Activated CD4-positive, alpha-beta T cell treated with anti-CD3 and anti-CD28 coated beads for 36 hours (primary cell): ENCODE measurements at regions of chr17 and their contacts with region 1.

Region 1: GRCh38 chr17:78818932-78819331 is 21.7 kb downstream of the USP36 start:
- DNase-seq: peak; percentile 64
- ATAC-seq: peak; percentile 28
- H3K4me3 Mint-ChIP-seq: peak overlapping the region; percentile 30
- H3K27ac Mint-ChIP-seq: peak overlapping the region; percentile 90
- H3K4me1 Mint-ChIP-seq: peaks cover 66% of the 10 kb centered on the region
- H3K27me3 Mint-ChIP-seq: no peaks in the 10 kb centered on the region

Region 2: DNA sequence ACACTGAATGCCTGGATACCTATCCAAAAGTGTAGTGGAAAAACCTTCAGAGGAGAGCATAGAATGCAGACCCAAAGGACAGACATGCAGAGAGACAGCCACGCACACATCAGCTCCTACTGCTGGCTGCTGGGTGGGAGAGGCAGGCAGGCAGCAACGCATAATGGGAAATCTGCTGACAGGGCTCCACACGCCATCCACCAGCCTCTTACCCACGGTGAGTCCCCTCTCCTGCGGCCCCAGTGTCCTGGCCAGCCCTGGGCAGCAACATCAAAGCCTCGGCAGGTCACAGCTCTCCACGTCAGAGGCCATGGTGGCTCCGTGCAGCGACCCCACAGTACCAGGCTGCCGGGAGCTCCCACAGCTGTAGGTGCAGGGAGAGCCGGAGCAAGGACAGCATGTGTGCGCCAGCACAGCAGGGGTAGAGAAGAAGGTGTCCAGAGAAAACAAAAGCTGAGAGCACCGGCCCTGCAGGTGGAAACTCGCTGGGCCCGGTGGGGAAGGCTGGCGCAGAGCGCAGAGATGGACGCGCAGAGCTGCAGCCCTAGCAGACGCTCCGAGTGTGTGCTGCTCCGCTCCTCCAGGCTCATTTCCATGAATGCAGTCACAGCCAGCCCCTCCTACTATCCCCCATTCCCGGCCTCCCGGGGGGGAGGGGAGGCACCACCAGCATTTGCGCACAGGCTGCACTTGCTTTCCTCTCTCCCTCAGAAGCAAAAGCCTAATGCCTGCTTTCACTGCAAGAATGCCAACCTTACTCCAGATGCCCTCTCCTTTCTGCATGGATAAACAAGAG is 95.7 kb before region 1 on chr17:
- CTCF ChIA-PET with region 1: interaction called, 3 read pairs
- POLR2A ChIA-PET with region 1: no interaction called
- intact Hi-C with region 1: loop called in 1 of 2 experiments (anchors 1 kb)
- DNase-seq: no peak
- ATAC-seq: no peak
- H3K4me3 Mint-ChIP-seq: no peak overlapping the region
- H3K27ac Mint-ChIP-seq: peak overlapping the region; percentile 83
- H3K4me1 Mint-ChIP-seq: peaks cover 94% of the 10 kb centered on the region
- H3K27me3 Mint-ChIP-seq: no peaks in the 10 kb centered on the region

Region 3: DNA sequence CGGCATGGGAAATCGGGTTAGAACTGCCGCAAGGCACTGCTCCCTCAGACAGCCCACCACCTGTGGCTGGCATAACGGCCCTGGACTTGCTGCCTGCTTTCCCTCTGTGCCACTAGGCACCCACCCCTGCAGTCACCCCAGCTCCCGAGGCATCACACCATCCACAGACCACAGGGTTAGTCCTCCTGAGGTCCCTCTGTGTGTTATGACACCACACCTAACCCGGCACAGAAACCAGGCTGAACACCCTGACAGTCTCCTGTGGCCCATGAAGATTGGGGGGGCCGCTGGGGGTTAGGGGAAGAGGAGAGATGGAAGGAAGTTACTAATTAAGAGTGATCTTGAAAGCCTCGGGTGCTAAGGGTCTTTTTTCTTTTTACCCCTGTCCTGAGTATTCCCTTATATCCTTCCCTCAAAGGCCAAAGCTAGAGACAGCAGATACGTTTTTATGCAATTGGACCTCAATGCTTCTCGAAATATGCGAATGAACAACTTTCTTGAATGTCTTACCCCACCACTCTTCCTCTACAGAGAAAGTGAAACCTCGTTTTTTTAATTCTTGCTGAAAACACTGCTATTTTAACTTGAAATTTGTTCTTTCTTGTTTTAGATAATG is 43.9 kb before region 1 on chr17:
- CTCF ChIA-PET with region 1: no interaction called
- POLR2A ChIA-PET with region 1: no interaction called
- intact Hi-C with region 1: loop called in 1 of 2 experiments (anchors 5 kb)
- DNase-seq: peak; percentile 86
- ATAC-seq: peak; percentile 67
- H3K4me3 Mint-ChIP-seq: peak overlapping the region; percentile 84
- H3K27ac Mint-ChIP-seq: peak overlapping the region; percentile 100
- H3K4me1 Mint-ChIP-seq: peaks cover 68% of the 10 kb centered on the region
- H3K27me3 Mint-ChIP-seq: no peaks in the 10 kb centered on the region

Region 4: GRCh38 chr17:78805301-78805700 is 13.6 kb before region 1 on chr17:
- CTCF ChIA-PET with region 1: interaction called, 5 read pairs
- POLR2A ChIA-PET with region 1: interaction called, 8 read pairs
- intact Hi-C with region 1: loop called (anchors 1 kb)
- DNase-seq: peak; percentile 91
- ATAC-seq: peak; percentile 94
- H3K4me3 Mint-ChIP-seq: peak overlapping the region; percentile 41
- H3K27ac Mint-ChIP-seq: peak overlapping the region; percentile 95
- H3K4me1 Mint-ChIP-seq: peaks cover 57% of the 10 kb centered on the region
- H3K27me3 Mint-ChIP-seq: no peaks in the 10 kb centered on the region

Region 5: DNA sequence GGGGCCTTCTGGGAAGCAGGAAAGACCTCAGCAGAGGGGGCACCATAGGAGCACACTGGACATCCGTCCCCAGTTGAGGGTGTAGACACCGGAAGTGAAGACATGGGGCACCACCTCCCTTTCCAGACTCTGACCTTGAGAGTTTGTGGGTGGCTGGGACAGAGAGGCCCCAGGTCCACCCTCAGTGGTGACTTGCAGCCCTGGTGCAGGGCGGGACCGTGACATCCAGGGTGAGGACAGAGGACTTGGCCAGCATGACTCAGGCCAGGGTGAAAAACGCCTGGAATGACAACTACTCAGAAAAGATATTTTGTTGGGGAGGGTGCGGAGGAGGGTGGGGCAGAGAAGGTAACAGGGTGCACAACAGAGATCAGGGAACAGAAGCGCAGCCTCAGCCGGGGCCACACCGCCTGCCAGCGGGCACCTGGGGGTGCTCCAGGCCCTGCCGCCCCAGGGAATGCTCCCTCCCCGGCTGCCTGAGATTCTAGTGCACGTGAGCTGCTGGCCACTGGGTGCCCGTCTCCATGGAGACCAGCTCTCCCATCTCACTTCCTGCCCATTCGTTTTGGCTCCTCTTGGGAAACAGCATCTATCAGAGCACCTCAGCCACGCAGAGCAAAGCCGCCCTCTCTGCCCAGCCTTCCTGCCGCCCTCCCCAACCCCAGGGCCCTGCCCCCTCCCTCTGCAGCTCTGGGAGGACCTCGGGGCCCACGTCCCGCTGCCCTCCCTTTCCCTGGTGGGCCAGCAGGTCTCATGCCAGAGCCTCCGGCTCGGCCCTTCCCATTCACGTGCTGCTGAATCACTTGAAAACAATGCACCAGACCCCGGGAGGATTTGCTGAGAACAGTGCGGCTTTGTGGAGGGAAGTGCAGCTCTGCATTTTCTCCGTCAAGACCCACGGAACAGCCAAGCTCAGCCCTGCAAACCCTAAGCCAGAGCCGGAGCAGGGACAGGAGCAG is 64.5 kb after region 1 on chr17:
- CTCF ChIA-PET with region 1: no interaction called
- POLR2A ChIA-PET with region 1: interaction called, 11 read pairs
- intact Hi-C with region 1: no loop called
- DNase-seq: peak; percentile 18
- ATAC-seq: peak; percentile 32
- H3K4me3 Mint-ChIP-seq: no peak overlapping the region
- H3K27ac Mint-ChIP-seq: peak overlapping the region; percentile 72
- H3K4me1 Mint-ChIP-seq: peaks cover 27% of the 10 kb centered on the region
- H3K27me3 Mint-ChIP-seq: no peaks in the 10 kb centered on the region

Region 6: DNA sequence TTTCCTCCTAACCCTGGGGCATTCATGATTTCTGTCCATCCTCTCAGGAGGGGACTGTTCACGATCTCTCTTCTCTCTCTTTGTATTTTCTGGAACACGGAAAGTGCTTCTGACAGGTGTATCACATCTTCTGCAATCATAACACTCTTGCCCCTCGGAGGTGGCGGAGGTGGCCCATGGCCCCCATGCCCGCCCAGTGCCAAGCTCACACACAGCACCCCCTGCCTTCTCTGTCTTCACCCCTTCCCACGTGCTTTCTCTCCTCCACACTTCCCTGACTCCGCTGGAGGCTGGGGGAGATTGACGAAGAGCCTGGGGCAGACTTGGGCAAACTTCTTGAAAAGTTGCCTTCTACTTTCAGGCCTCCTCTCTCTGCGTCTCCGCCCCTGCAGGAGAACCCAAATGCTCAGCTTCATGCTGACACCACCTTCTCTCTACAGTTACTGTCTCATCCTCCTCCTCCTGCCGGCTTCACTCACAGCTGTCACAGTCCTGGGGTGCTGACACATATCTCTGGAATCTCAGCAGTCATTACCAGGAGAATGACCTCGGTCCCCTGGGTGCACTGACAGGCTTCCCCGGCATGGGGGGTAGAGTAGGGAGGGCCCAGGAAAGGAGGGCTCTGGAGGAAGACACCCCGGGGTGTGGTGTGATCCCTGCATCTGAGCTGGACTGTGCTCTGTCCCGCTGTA is 382.8 kb after region 1 on chr17:
- CTCF ChIA-PET with region 1: no interaction called
- POLR2A ChIA-PET with region 1: no interaction called
- intact Hi-C with region 1: no loop called
- DNase-seq: no peak
- ATAC-seq: no peak
- H3K4me3 Mint-ChIP-seq: no peak overlapping the region
- H3K27ac Mint-ChIP-seq: no peak overlapping the region
- H3K4me1 Mint-ChIP-seq: no peaks in the 10 kb centered on the region
- H3K27me3 Mint-ChIP-seq: peaks cover 14% of the 10 kb centered on the region